MCF 10A (cell line): ENCODE measurements at regions of chr15 and their contacts with region 1.

Region 1: GRCh38 chr15:70488002-70488605 is 275.3 kb downstream of the UACA start:
- DNase-seq: peak; percentile 77
- H3K4me3 Mint-ChIP-seq: no peak overlapping the region
- H3K27ac Mint-ChIP-seq: no peak overlapping the region
- H3K4me1 Mint-ChIP-seq: peaks cover 26% of the 10 kb centered on the region
- H3K27me3 Mint-ChIP-seq: peaks cover 3% of the 10 kb centered on the region
- CTCF ChIP-seq: peak; percentile 94

Region 2: DNA sequence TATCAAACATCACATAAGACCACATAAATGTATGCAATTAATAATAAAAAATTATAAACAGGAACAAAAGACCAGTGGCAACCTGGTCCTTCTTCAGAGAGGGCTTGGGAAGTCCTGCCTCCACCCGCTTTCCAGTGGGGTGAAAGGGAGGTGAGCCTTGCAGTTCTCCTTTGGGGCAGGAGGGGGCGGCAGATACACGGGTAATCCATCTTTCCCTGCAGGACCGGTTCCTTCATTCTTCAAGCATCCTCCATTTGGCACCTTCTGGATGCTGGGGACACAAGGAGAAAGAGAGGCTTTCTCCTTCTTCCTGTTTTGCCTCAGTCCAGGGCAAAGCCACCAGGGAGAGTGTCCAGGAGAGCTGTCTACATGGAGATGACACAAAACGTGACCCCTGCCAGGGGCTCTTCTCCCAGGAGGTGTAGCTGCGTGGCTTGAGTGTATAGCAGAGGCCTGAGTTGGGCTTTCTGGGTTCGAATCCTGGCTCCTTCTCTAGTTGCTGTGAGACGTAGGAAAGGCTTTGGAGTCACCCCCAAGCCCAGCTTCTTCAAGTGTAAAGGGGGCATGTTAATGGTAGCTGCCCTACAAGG is 1012.2 kb before region 1 on chr15:
- CTCF ChIA-PET with region 1: interaction called, 34 read pairs
- POLR2A ChIA-PET with region 1: no interaction called
- intact Hi-C with region 1: loop called (anchors 1 kb)
- DNase-seq: peak; percentile 72
- H3K4me3 Mint-ChIP-seq: no peak overlapping the region
- H3K27ac Mint-ChIP-seq: no peak overlapping the region
- H3K4me1 Mint-ChIP-seq: no peaks in the 10 kb centered on the region
- H3K27me3 Mint-ChIP-seq: no peaks in the 10 kb centered on the region
- CTCF ChIP-seq: peak; percentile 96

Region 3: DNA sequence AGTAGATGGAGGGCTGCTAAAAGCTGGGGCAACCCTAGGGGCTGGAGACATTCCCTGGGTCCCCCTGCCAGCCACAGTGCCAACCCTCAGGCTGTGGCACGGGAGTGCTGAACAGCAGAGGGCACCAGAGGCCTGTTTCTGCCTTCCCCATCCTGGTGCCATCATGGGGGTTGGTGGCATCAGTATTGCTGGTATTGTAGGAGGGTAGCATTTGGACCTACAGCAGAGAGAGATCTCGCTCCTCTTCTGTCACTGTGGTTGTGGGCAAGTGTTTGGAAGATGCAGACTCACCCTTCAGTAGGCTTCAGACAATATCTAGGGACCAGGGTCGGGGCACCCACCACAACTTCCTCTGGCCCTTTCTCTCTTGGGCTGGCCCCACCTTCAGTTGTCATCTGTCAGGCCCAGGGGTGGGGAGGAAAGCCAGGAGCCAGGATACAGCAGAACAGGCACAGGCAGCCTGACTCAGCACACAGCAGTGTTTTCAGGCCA is 912.0 kb before region 1 on chr15:
- CTCF ChIA-PET with region 1: interaction called, 12 read pairs
- POLR2A ChIA-PET with region 1: no interaction called
- intact Hi-C with region 1: loop called (anchors 1 kb)
- DNase-seq: peak; percentile 61
- H3K4me3 Mint-ChIP-seq: no peak overlapping the region
- H3K27ac Mint-ChIP-seq: no peak overlapping the region
- H3K4me1 Mint-ChIP-seq: peaks cover 21% of the 10 kb centered on the region
- H3K27me3 Mint-ChIP-seq: no peaks in the 10 kb centered on the region
- CTCF ChIP-seq: peak; percentile 82

Region 4: GRCh38 chr15:70466895-70467529 is 21.1 kb before region 1 on chr15:
- CTCF ChIA-PET with region 1: interaction called, 19 read pairs
- POLR2A ChIA-PET with region 1: no interaction called
- intact Hi-C with region 1: no loop called
- DNase-seq: peak; percentile 71
- H3K4me3 Mint-ChIP-seq: no peak overlapping the region
- H3K27ac Mint-ChIP-seq: no peak overlapping the region
- H3K4me1 Mint-ChIP-seq: peaks cover 6% of the 10 kb centered on the region
- H3K27me3 Mint-ChIP-seq: peaks cover 11% of the 10 kb centered on the region
- CTCF ChIP-seq: peak; percentile 68

Region 5: DNA sequence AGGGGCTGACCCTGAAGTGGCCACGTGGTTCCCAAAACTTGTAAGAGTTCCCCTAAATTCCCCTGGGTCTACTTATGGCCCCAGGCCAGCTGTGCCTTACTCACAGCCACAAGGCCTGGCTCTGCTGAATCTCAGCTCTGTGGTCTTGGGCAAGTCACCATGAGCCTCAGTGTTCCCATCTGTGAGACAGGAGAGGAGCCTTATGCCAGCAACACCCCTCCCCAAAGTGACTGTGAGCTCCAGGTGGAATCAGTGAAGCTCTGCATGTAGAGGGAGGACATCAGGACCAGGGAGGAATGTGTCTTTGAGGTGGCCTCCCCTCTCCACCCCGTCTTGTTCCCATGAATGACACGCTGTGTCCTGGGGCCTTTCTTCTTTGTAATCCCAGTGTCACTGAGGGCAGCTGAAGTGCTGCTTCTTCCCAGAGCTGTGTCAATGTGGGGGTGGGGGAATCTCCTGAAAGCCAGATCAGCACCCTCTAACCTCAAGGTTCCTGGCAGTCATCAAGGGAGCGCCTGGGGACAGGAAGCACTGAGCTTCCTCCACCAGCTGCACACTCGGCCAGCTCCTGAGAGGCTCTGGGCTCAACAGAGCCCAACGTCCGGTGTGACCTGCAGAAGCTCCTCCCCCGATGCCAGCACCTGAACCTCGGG is 16.3 kb after region 1 on chr15:
- CTCF ChIA-PET with region 1: interaction called, 15 read pairs
- POLR2A ChIA-PET with region 1: interaction called, 3 read pairs
- intact Hi-C with region 1: no loop called
- DNase-seq: peak; percentile 78
- H3K4me3 Mint-ChIP-seq: no peak overlapping the region
- H3K27ac Mint-ChIP-seq: no peak overlapping the region
- H3K4me1 Mint-ChIP-seq: peaks cover 46% of the 10 kb centered on the region
- H3K27me3 Mint-ChIP-seq: no peaks in the 10 kb centered on the region
- CTCF ChIP-seq: no peak